Mammary epithelial cell (primary cell): ENCODE measurements at regions of chr17 and their contacts with region 1.

Region 1: DNA sequence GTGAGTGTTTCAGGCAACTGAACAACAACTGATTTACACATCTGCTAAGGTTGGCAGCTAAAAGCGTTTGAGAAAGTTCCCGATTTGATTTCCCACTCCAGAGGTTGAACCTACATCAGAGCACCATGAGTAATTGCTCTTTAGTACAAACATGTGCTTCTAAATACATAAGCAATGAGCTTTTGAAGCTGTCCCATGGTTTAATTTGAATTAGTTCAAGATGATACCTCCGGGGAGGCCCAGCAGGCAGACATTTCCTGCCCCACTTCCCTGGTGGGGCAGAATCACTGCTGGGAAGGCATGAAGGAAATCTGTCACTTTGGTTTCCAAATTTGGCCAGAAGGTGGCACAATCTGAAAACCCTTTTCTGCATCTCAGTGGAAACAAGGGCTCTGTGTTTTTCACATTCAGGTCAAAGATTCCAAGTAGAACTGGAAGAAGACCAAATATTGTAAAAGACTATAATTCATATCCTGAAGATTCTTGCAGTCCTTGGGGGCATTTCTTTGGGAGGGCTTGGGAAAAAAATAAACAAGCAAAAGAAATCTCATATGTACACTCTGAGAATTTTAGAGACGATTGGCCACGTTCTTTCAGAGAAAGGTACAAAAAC is 176.2 kb upstream of the FAM20A start:
- DNase-seq: peak; percentile 37
- H3K4me3 ChIP-seq: no peak overlapping the region
- H3K27ac ChIP-seq: no peak overlapping the region
- H3K4me1 ChIP-seq: no peaks in the 10 kb centered on the region
- H3K27me3 ChIP-seq: no peaks in the 10 kb centered on the region
- CTCF ChIP-seq: peak; percentile 57 to 76

Region 2: GRCh38 chr17:68910251-68910705 is 132.9 kb after region 1 on chr17:
- CTCF ChIA-PET with region 1: no interaction called
- dilution Hi-C with region 1: no loop called
- in situ Hi-C with region 1: no loop called
- intact Hi-C with region 1: loop called (anchors 1 kb)
- DNase-seq: peak; percentile 5
- H3K4me3 ChIP-seq: no peak overlapping the region
- H3K27ac ChIP-seq: peak overlapping the region; percentile 89
- H3K4me1 ChIP-seq: peaks cover 26% of the 10 kb centered on the region
- H3K27me3 ChIP-seq: no peaks in the 10 kb centered on the region
- CTCF ChIP-seq: no peak

Region 3: DNA sequence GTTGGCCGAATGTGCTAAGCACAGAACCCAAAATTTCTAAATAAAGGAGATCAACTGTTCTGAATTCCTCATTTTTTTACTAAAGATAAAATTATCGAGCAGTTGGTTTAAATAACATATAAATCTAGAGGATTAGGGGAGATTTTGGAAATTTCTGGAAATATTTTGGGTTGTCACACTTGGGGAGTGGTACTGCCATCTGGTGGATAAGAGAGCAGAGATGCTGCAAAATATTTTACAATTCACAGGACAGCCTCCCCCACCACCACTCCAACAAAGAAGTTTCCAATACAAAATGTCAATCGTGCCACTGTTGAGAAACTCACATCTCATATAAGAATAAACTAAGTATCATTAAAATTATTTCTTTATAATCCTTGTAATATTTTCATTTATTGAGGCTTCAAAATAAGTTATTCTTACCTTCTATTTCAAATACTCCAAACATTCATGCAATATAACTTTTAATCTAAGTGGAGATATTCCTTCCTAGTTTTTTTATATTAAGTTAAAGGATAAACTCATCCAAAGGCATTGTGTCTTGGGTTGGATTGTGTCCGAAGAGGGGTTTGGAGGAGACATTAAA is 194.9 kb after region 1 on chr17:
- CTCF ChIA-PET with region 1: no interaction called
- dilution Hi-C with region 1: no loop called
- in situ Hi-C with region 1: loop called (anchors 5 to 10 kb)
- intact Hi-C with region 1: loop called (anchors 1 kb)
- DNase-seq: no peak
- H3K4me3 ChIP-seq: no peak overlapping the region
- H3K27ac ChIP-seq: no peak overlapping the region
- H3K4me1 ChIP-seq: no peaks in the 10 kb centered on the region
- H3K27me3 ChIP-seq: no peaks in the 10 kb centered on the region
- CTCF ChIP-seq: peak; percentile 38 to 64

Region 4: GRCh38 chr17:68993112-68993511 is 215.8 kb after region 1 on chr17:
- CTCF ChIA-PET with region 1: no interaction called
- dilution Hi-C with region 1: loop called (anchors 5 kb)
- in situ Hi-C with region 1: no loop called
- intact Hi-C with region 1: no loop called
- DNase-seq: peak; percentile 47
- H3K4me3 ChIP-seq: no peak overlapping the region
- H3K27ac ChIP-seq: no peak overlapping the region
- H3K4me1 ChIP-seq: no peaks in the 10 kb centered on the region
- H3K27me3 ChIP-seq: no peaks in the 10 kb centered on the region
- CTCF ChIP-seq: no peak

Region 5: GRCh38 chr17:69047368-69048263 is 270.3 kb after region 1 on chr17:
- CTCF ChIA-PET with region 1: no interaction called
- dilution Hi-C with region 1: no loop called
- in situ Hi-C with region 1: no loop called
- intact Hi-C with region 1: loop called (anchors 5 kb)
- DNase-seq: peak; percentile 52
- H3K4me3 ChIP-seq: no peak overlapping the region
- H3K27ac ChIP-seq: no peak overlapping the region
- H3K4me1 ChIP-seq: peaks cover 4% of the 10 kb centered on the region
- H3K27me3 ChIP-seq: no peaks in the 10 kb centered on the region
- CTCF ChIP-seq: no peak

Region 6: GRCh38 chr17:69246726-69247375 is 469.5 kb after region 1 on chr17:
- CTCF ChIA-PET with region 1: interaction called, 3 read pairs
- dilution Hi-C with region 1: loop called (anchors 5 kb)
- in situ Hi-C with region 1: loop called (anchors 5 kb)
- intact Hi-C with region 1: loop called (anchors 1 kb)
- DNase-seq: peak; percentile 24
- H3K4me3 ChIP-seq: no peak overlapping the region
- H3K27ac ChIP-seq: no peak overlapping the region
- H3K4me1 ChIP-seq: no peaks in the 10 kb centered on the region
- H3K27me3 ChIP-seq: no peaks in the 10 kb centered on the region
- CTCF ChIP-seq: peak; percentile 57 to 58